PC-3 (cell line): ENCODE measurements at regions of chr15 and their contacts with region 1.

Region 1: DNA sequence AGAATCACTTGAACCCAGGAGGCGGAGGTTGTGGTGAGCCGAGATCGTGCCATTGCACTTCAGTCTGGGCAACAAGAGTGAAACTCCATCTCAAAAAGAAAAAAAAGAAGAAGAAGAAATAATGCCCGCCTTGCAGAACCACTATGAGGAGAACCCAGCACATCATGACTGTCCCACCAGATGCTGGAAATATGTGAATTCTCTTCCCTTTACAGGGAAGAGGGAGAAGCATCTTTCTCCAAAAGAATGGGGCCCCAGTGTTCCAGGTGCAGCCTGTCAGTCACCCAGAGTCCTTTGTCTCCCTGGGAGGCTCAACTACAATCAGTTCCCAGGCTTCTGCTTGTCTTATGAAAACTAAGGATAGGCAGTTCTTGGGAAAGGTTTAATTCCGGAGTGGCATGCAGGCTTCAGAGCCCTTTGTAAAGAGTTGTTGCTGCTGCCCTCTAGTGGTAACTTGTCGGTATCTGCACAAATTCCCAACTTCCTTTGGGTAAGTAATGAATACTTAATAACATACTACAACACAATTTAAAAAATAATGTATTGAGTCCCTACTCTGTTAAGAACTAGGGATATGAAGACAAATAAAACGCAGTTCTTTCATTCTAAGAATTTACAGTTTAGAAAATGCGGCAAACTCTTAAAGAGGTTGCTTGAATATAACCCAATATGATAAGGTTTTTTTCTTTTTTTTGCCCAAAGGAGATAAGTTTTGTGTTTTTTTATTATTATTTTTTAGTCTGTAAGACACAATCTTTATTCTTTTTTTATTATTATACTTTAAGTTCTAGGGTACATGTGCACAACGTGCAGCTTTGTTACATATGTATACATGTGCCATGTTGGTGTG is 18.6 kb upstream of the TICRR start:
- DNase-seq: peak; percentile 91
- ATAC-seq: peak; percentile 80
- H3K4me3 ChIP-seq: no peak overlapping the region
- H3K27ac ChIP-seq: no peak overlapping the region
- H3K4me1 ChIP-seq: no peaks in the 10 kb centered on the region
- H3K27me3 ChIP-seq: no peaks in the 10 kb centered on the region
- CTCF ChIP-seq: peak; percentile 87

Region 2: GRCh38 chr15:89442671-89443307 is 113.8 kb before region 1 on chr15:
- CTCF ChIA-PET with region 1: no interaction called
- POLR2A ChIA-PET with region 1: no interaction called
- intact Hi-C with region 1: loop called (anchors 5 kb)
- DNase-seq: peak; percentile 77
- ATAC-seq: peak; percentile 74
- H3K4me3 ChIP-seq: no peak overlapping the region
- H3K27ac ChIP-seq: no peak overlapping the region
- H3K4me1 ChIP-seq: no peaks in the 10 kb centered on the region
- H3K27me3 ChIP-seq: no peaks in the 10 kb centered on the region
- CTCF ChIP-seq: peak; percentile 93

Region 3: GRCh38 chr15:89492111-89492641 is 64.5 kb before region 1 on chr15:
- CTCF ChIA-PET with region 1: no interaction called
- POLR2A ChIA-PET with region 1: no interaction called
- intact Hi-C with region 1: loop called (anchors 1 kb)
- DNase-seq: peak; percentile 41
- ATAC-seq: peak; percentile 71
- H3K4me3 ChIP-seq: no peak overlapping the region
- H3K27ac ChIP-seq: no peak overlapping the region
- H3K4me1 ChIP-seq: no peaks in the 10 kb centered on the region; the same call in 1 of the 2 replicates
- H3K27me3 ChIP-seq: no peaks in the 10 kb centered on the region
- CTCF ChIP-seq: peak; percentile 75

Region 4: GRCh38 chr15:89514596-89515406 is 41.8 kb before region 1 on chr15:
- CTCF ChIA-PET with region 1: no interaction called
- POLR2A ChIA-PET with region 1: no interaction called
- intact Hi-C with region 1: no loop called
- DNase-seq: peak; percentile 80
- ATAC-seq: peak; percentile 63
- H3K4me3 ChIP-seq: no peak overlapping the region
- H3K27ac ChIP-seq: peak overlapping the region; percentile 88
- H3K4me1 ChIP-seq: peaks cover 16% of the 10 kb centered on the region
- H3K27me3 ChIP-seq: no peaks in the 10 kb centered on the region
- CTCF ChIP-seq: no peak

Region 5: GRCh38 chr15:89964232-89964954 is 407.8 kb after region 1 on chr15:
- CTCF ChIA-PET with region 1: no interaction called
- POLR2A ChIA-PET with region 1: no interaction called
- intact Hi-C with region 1: no loop called
- DNase-seq: no peak
- ATAC-seq: no peak
- H3K4me3 ChIP-seq: no peak overlapping the region
- H3K27ac ChIP-seq: no peak overlapping the region
- H3K4me1 ChIP-seq: no peaks in the 10 kb centered on the region
- H3K27me3 ChIP-seq: no peaks in the 10 kb centered on the region
- CTCF ChIP-seq: no peak